Heart left ventricle (tissue), 16 donors: ENCODE measurements at regions of chr16 and their contacts with region 1.

Region 1: DNA sequence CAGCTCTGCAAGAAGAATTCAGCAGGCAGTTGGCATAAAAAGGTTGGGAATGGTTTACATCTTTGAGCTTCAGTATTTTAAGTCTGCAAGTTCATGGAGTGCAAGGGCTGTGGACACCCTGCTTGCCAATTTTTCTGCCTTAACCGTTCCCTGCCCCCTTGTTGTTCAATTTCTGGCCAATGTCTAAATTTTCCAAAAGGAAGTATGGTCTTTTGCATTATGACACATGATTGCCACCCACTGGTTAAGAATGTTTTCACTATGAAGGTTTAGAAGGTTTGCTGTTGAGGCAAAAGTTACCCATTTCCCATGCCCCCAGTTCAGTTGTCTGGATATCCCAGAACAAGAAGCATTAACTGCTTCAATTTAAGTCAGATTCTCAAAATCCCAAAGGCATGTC is 441.9 kb downstream of the CDH13 start:
- DNase-seq: no peak
- ATAC-seq: peak in 1 of 4 donors; percentile 13
- H3K4me3 ChIP-seq: no peak overlapping the region
- H3K27ac ChIP-seq: no peak overlapping the region
- H3K4me1 ChIP-seq: peaks cover 0 to 8% (median 0%) of the 10 kb centered on the region in 12 donors
- H3K27me3 ChIP-seq: no peaks in the 10 kb centered on the region
- CTCF ChIP-seq: peak in 9 of 12 donors; percentile 18 to 60 (median 22)
- POLR2A ChIP-seq: no peak

Region 2: DNA sequence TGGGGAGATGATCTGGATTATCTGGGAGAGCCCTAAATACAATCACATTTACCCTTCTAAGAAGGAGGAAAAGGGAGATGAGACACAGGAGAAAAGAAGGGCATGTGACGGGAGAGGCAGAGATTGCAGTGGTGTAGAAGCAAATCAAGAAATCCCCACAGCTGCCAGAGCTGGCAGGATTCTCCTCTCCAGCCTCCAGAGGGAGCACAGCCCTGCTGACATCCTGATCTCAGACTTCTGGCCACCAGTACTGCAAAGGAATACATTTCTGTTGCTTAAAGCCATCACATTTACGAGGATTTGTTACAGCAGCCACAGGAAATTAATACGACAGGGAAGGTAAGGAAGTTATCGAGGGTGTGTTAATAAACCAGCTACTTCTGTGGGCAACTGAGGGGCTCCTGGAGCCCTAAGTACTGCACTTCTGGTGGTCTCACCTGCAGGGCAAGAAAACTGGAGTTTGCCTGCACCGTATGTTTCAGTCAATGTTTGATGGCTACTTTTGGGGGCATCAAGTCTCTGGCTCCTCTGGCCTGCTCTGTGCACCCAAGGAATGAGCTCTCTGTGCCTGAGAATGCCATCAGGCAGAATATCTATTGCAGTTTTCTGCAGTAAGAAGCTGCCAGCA is 464.8 kb before region 1 on chr16:
- intact Hi-C with region 1: loop called in 5 of 10 experiments (anchors 5 to 10 kb)
- DNase-seq: peak; percentile 45 to 67 (median 52)
- ATAC-seq: peak; percentile 56 to 93 (median 84)
- H3K4me3 ChIP-seq: no peak overlapping the region
- H3K27ac ChIP-seq: no peak overlapping the region
- H3K4me1 ChIP-seq: peaks cover 0 to 6% (median 0%) of the 10 kb centered on the region in 12 donors
- H3K27me3 ChIP-seq: no peaks in the 10 kb centered on the region
- CTCF ChIP-seq: peak; percentile 45 to 83 (median 74)
- POLR2A ChIP-seq: no peak

Region 3: GRCh38 chr16:82748026-82748425 is 320.7 kb before region 1 on chr16:
- intact Hi-C with region 1: loop called in 1 of 10 experiments (anchors 10 kb)
- DNase-seq: peak; percentile 46 to 75 (median 60)
- ATAC-seq: peak in 3 of 4 donors; percentile 68 to 77 (median 75)
- H3K4me3 ChIP-seq: peak overlapping the region in 1 of 12 donors; percentile 0
- H3K27ac ChIP-seq: peak overlapping the region in 7 of 12 donors; percentile 5 to 41 (median 16)
- H3K4me1 ChIP-seq: peaks cover 0 to 48% (median 13%) of the 10 kb centered on the region in 12 donors
- H3K27me3 ChIP-seq: no peaks in the 10 kb centered on the region
- CTCF ChIP-seq: peak in 11 of 12 donors; percentile 9 to 48 (median 26)
- POLR2A ChIP-seq: no peak

Region 4: DNA sequence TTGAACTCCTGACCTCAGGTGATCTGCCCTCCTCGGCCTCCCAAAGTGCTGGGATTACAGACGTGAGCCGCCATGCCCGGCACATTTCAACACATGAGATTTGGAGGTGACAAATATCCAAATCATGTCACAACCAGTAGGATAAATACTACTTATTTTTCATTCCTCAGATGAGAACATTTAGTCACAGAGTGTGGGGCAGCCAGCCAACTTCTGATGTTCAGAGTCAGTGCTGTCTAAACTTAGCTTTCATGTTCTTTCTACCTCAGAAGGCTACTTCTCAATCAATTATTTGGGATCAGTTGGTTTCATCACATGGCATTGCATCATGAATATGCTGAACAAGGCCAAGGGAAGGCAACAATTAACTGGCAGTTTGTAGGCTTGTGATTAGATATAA is 307.4 kb before region 1 on chr16:
- intact Hi-C with region 1: loop called in 1 of 10 experiments (anchors 10 kb)
- DNase-seq: peak; percentile 78 to 93 (median 86)
- ATAC-seq: peak; percentile 91 to 94 (median 92)
- H3K4me3 ChIP-seq: peak overlapping the region in 5 of 12 donors; percentile 12 to 40 (median 28)
- H3K27ac ChIP-seq: peak overlapping the region; percentile 32 to 80 (median 63)
- H3K4me1 ChIP-seq: peaks cover 0 to 40% (median 20%) of the 10 kb centered on the region in 12 donors
- H3K27me3 ChIP-seq: no peaks in the 10 kb centered on the region
- CTCF ChIP-seq: no peak
- POLR2A ChIP-seq: no peak

Region 5: DNA sequence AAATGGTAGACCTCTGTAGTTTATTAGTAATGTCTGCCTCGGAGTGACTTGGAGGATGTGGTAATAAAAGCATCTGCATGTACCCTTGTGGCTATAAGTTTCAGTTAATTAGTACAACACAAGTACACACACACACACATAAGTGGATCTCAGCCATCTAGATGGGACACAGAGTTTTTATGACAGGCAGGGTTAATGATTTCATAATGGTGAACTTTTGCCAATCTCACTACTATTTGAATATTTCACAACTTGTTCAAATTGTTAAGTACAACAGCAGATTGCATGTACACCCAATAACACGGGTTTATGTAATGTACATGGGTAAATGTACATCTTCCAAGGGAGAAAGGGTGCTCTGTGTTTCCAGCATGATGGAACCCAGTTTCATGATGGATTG is 227.8 kb after region 1 on chr16:
- intact Hi-C with region 1: no loop called
- DNase-seq: no peak
- ATAC-seq: no peak
- H3K4me3 ChIP-seq: no peak overlapping the region
- H3K27ac ChIP-seq: no peak overlapping the region
- H3K4me1 ChIP-seq: no peaks in the 10 kb centered on the region
- H3K27me3 ChIP-seq: no peaks in the 10 kb centered on the region
- CTCF ChIP-seq: no peak
- POLR2A ChIP-seq: no peak